Common myeloid progenitor, CD34-positive (primary cell): ENCODE measurements at regions of chr22 and their contacts with region 1.

Region 1: DNA sequence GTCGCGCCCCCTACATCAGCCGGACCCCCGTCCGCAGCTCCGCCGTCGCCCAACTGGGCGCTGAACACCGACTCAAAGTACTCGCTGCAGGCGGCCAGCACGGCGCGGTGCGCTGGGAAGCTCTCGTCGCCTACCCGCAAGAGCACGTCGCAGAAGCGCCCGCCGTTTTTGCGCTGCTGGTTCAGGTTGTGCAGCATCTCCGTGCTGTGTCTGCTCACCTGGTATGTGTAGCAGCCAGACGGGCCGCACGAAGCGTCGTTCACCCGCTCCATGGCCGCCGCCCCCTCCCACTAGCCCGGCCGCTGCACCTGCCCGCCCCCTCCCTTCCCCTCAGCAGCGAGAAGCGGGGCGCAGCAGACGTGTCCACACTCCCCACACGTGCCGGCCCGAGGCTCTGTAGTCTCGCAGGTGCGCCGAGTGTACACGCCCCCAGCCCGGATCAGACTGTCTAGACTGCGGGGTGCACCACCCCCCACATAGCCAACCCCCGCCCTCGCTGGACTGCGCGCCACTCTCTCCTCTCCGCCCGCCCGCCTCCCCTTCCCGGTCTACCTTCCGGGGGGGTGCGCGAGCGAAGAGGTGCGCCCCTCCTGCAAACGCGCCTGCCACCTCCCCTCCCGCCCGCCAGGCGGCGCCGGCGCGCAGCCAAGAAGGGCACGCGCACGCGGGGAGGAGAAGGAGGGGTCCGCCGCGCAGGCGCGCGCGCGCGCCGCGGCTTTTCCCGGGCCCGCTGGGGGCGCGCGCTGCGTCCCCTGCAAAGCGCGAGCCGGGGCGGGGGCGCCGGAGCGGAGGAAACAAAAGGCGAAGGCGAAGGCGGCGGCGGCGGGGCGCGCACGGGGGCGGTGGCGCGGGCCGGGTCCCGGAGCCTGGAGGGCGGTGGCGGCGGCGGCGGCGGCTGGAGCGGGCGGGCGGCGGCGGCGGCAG is 553 bp downstream of the PATZ1 start:
- DNase-seq: peak; percentile 89 to 94 (median 94)
- H3K4me3 ChIP-seq: peak overlapping the region; percentile 43 to 87 (median 70)
- H3K27ac ChIP-seq: no peak overlapping the region
- H3K4me1 ChIP-seq: peaks cover 4 to 60% (median 56%) of the 10 kb centered on the region in 4 experiments
- H3K27me3 ChIP-seq: no peaks in the 10 kb centered on the region

Region 2: GRCh38 chr22:31279821-31280505 is 65.6 kb before region 1 on chr22:
- CTCF ChIA-PET with region 1: no interaction called
- POLR2A ChIA-PET with region 1: no interaction called
- DNase-seq: no peak
- H3K4me3 ChIP-seq: no peak overlapping the region
- H3K27ac ChIP-seq: peak overlapping the region in 1 of 2 experiments; percentile 8
- H3K4me1 ChIP-seq: peaks cover 3 to 16% (median 11%) of the 10 kb centered on the region in 4 experiments
- H3K27me3 ChIP-seq: no peaks in the 10 kb centered on the region

Region 3: DNA sequence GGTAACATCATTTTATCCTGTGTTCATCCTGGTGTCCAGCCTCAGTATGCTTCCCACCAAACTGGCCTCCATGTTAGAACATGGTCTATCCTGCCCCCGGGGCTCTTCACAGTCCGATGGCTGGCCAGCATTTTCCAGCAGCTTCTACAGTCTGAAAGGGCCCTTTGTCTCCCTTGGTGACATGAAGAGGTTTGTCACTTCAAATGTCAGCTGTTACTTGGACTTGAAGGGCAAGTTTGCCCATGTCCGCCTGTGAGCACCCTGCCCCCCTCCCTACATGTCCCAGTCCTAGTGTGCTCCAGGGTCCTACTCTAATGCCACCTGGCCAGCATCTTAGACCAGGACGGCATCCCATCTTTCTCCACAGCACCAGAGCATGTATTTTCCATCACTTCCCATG is 24.2 kb before region 1 on chr22:
- CTCF ChIA-PET with region 1: no interaction called
- POLR2A ChIA-PET with region 1: no interaction called
- DNase-seq: no peak
- H3K4me3 ChIP-seq: no peak overlapping the region
- H3K27ac ChIP-seq: no peak overlapping the region
- H3K4me1 ChIP-seq: no peaks in the 10 kb centered on the region
- H3K27me3 ChIP-seq: no peaks in the 10 kb centered on the region

Region 4: GRCh38 chr22:31360029-31360428 is 14.4 kb after region 1 on chr22:
- CTCF ChIA-PET with region 1: no interaction called
- POLR2A ChIA-PET with region 1: no interaction called
- DNase-seq: no peak
- H3K4me3 ChIP-seq: no peak overlapping the region
- H3K27ac ChIP-seq: no peak overlapping the region
- H3K4me1 ChIP-seq: no peaks in the 10 kb centered on the region
- H3K27me3 ChIP-seq: no peaks in the 10 kb centered on the region

Region 5: GRCh38 chr22:31399211-31400028 is 53.8 kb after region 1 on chr22 and contains the start of gene DRG1:
- CTCF ChIA-PET with region 1: interaction called, 8 read pairs
- POLR2A ChIA-PET with region 1: interaction called, 25 read pairs
- DNase-seq: peak; percentile 96 to 99 (median 98)
- H3K4me3 ChIP-seq: peak within 1 kb of the TSS; percentile 46 to 95 (median 93)
- H3K27ac ChIP-seq: peak within 1 kb of the TSS; percentile 96 to 98
- H3K4me1 ChIP-seq: peaks cover 8 to 17% (median 12%) of the 10 kb centered on the region in 4 experiments
- H3K27me3 ChIP-seq: no peaks in the 10 kb centered on the region